Mammary epithelial cell (primary cell): ENCODE measurements at regions of chr4 and their contacts with region 1.

Region 1: GRCh38 chr4:77819843-77820648 is 878 bp upstream of the CNOT6L start:
- DNase-seq: peak; percentile 86
- H3K4me3 ChIP-seq: peak overlapping the region; percentile 72 to 90 (median 83)
- H3K27ac ChIP-seq: peak overlapping the region; percentile 93
- H3K4me1 ChIP-seq: peaks cover 15% of the 10 kb centered on the region
- H3K27me3 ChIP-seq: no peaks in the 10 kb centered on the region
- CTCF ChIP-seq: no peak

Region 2: GRCh38 chr4:77742054-77742453 is 78.0 kb before region 1 on chr4:
- CTCF ChIA-PET with region 1: no interaction called
- dilution Hi-C with region 1: no loop called
- in situ Hi-C with region 1: no loop called
- intact Hi-C with region 1: loop called (anchors 5 kb)
- DNase-seq: peak; percentile 64
- H3K4me3 ChIP-seq: no peak overlapping the region
- H3K27ac ChIP-seq: peak overlapping the region; percentile 13
- H3K4me1 ChIP-seq: peaks cover 8% of the 10 kb centered on the region
- H3K27me3 ChIP-seq: no peaks in the 10 kb centered on the region
- CTCF ChIP-seq: no peak

Region 3: DNA sequence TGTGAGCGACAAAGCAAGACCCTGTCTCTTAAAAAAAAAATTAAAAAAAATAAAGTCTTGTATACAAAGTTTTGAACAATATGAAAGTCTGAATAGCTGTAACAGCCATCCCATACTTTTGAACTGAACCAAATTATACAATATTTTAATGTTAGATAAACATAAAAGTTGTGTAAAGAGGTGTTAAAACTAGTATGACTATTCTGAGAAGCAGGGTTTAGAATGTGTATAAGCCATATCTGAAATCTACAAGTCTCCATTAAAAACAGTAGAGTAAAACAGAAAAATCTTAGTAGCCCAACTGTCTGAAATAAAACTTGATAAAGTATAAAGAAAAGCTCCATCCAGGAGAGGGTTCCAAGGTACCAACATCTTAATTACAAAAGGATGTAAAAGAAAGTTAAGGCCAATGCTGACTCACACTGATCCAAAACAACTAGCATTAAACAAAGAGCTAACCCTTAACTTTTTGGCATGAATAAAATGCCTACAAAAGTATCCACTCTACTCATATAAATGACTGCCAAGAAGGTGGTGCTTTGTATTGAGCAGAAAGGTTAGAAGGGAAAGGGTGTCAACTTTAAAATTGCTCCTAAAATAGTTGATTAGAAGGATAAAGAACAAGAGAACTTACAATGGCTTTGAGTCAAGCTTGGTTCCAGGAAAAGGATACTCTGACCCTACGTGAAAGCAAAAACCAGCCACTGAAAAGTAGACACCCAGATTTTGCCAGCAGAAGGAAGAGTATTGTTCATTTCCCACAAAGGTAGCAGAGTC is 19.4 kb before region 1 on chr4:
- CTCF ChIA-PET with region 1: no interaction called
- dilution Hi-C with region 1: no loop called
- in situ Hi-C with region 1: no loop called
- intact Hi-C with region 1: no loop called
- DNase-seq: peak; percentile 0
- H3K4me3 ChIP-seq: no peak overlapping the region
- H3K27ac ChIP-seq: no peak overlapping the region
- H3K4me1 ChIP-seq: peaks cover 18% of the 10 kb centered on the region
- H3K27me3 ChIP-seq: no peaks in the 10 kb centered on the region
- CTCF ChIP-seq: no peak